H1 (cell line): ENCODE measurements at regions of chr9 and their contacts with region 1.

Region 1: GRCh38 chr9:2193552-2193951 is 178.4 kb downstream of the SMARCA2 start:
- DNase-seq: no peak
- H3K4me3 ChIP-seq: no peak overlapping the region
- H3K27ac ChIP-seq: no peak overlapping the region
- H3K4me1 ChIP-seq: peaks cover 0 to 2% (median 0%) of the 10 kb centered on the region in 4 experiments; a peak in 3 of 7 replicates
- H3K27me3 ChIP-seq: no peaks in the 10 kb centered on the region
- CTCF ChIP-seq: peak in 1 of 3 experiments; percentile 23; a peak in 1 of 4 replicates
- EP300 ChIP-seq: no peak
- POLR2A ChIP-seq: no peak
- RAD21 ChIP-seq: no peak; a peak in 2 of 4 replicates

Region 2: DNA sequence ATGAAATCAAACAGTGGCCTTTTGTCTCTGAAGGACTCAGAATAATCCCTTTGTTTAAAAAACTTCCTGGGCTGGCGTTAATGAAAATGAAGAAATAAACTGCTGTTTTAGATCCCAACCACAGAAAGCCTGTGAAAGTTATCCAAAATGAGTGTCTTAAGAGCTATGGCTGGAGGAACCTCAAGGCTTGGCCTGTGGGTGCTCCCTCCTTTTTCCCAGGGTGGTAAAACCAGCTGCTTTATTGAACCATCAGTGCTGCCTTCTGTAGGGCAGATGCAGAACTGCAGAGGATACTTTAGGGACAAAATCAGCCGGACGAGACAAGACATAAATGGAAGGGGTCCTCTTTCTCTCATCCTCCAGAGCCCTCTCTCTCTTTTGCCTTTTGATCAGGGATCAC is 77.5 kb before region 1 on chr9:
- CTCF ChIA-PET with region 1: no interaction called
- POLR2A ChIA-PET with region 1: no interaction called
- DNase-seq: peak in 1 of 2 experiments; percentile 70
- H3K4me3 ChIP-seq: no peak overlapping the region
- H3K27ac ChIP-seq: no peak overlapping the region
- H3K4me1 ChIP-seq: no peaks in the 10 kb centered on the region
- H3K27me3 ChIP-seq: no peaks in the 10 kb centered on the region
- CTCF ChIP-seq: peak; percentile 30 to 85 (median 67)
- EP300 ChIP-seq: no peak
- POLR2A ChIP-seq: no peak
- RAD21 ChIP-seq: peak; percentile 60 to 72

Region 3: GRCh38 chr9:2145746-2146145 is 47.8 kb before region 1 on chr9:
- CTCF ChIA-PET with region 1: interaction called, 12 read pairs
- POLR2A ChIA-PET with region 1: no interaction called
- DNase-seq: no peak
- H3K4me3 ChIP-seq: no peak overlapping the region
- H3K27ac ChIP-seq: no peak overlapping the region
- H3K4me1 ChIP-seq: no peaks in the 10 kb centered on the region
- H3K27me3 ChIP-seq: no peaks in the 10 kb centered on the region
- CTCF ChIP-seq: no peak
- EP300 ChIP-seq: no peak
- POLR2A ChIP-seq: no peak
- RAD21 ChIP-seq: no peak